Sciatic nerve (tissue), 2 donors: ENCODE measurements at regions of chr14 and their contacts with region 1.

Region 1: GRCh38 chr14:51873221-51873893 is 12.9 kb downstream of the GNG2 start:
- DNase-seq: no peak
- ATAC-seq: peak; percentile 76

Region 2: DNA sequence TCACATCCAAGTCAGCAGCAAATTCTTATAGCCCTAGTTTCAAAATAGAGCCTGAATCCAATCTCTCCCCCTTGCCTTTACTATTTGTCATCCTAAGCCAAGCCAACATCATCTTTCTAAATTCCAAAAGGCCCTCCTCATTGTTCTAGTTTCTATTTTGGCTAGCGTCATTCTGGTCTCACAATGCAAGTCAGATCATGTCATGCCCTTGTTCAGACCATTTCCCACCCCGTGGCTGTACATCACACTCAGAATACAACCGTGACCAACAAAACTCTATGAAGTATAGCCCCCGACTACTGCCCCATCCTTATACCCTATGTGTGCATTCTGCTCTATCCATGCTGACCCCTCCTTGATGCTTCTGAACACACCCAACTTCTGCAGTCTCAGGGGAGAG is 25.2 kb before region 1 on chr14:
- intact Hi-C with region 1: loop called (anchors 1 kb)
- DNase-seq: no peak
- ATAC-seq: no peak